Left ventricle myocardium superior (tissue), 1 donor: ENCODE measurements at regions of chr9 and their contacts with region 1.

Region 1: DNA sequence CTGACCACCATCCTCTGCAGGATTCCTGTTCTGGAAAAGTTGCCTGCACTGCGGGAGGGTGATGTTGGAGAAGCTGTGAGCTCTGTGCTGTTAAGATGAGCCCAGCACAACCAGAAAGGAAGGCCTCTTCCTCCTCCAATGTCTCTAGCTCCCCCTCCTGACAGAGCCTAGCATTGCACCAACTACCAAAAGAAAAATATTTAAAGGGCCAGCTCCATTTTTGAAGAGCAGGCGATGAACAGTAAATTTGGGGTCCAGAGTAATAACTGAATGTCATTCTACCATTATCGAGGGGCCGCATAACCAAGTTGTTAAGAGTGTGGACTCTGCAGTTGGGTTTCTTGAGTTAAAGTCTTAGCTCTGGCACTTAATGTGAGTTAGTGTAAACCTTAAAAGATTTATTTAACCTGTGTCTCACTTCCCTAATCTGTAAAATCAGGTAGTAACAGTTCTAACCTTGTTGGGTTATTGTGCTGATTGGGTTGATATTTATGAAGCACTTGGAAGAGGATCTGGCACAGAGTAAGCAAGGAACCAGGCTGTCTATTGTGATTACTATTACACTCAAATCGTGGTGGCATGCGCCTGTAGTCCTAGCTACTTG is 3.9 kb downstream of the TEX53 start:
- DNase-seq: no peak
- ATAC-seq: peak; percentile 65

Region 2: GRCh38 chr9:114405294-114406034 is 248.2 kb before region 1 on chr9:
- intact Hi-C with region 1: loop called (anchors 10 kb)
- DNase-seq: peak; percentile 73
- ATAC-seq: peak; percentile 96

Region 3: DNA sequence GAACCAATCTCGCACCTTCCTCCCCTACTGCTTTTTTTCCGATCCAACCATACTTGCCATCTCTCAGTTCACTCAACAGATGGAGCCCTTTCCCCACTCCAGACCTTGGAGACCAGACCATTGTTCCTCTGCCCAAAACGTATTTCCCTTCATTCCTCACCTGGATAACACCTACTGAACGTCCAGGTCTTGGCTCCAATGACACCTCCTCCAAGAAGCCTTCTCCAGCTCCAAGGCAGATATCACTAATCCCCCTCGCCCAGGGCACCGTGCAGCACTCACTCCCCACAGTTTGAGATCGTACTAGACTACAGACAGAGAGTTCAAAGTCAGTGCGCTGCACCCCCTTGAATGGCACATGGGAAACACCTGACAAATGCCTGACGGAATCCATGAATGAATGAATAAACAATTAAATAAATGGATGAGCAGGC is 218.8 kb before region 1 on chr9:
- intact Hi-C with region 1: loop called (anchors 10 kb)
- DNase-seq: no peak
- ATAC-seq: peak; percentile 32

Region 4: DNA sequence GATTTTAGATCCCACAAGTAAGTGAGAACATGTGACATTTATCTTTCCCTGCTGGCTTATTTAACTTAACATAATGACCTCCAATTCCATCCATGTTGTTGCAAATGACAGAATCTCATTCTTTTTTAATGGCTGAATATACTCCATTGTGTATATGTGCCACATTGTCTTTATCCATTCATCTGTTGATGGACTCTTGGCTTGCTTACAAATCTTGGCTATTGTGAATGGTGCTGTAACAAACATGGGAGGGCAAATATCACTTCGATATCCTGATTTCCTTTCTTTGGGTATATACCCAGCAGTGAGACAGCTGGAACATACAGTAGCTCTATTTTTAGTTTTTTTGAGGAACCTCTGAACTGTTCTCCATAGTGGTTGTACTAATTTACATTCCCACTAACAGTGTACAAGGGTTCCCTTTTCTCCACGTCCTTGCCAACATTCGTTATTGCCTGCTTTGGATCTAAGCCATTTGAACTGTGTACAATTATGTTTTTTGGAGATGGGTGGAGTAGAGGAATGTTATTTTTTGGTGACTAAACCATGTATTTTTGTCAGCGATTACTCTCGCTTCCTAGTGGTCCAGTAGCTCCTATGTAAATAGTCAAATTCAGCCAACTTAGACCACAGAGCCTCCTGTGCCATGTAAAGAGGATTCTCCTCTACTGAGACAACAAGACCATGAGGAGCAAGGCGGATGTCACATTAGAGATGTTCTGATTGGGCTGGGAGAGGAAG is 91.6 kb after region 1 on chr9:
- intact Hi-C with region 1: no loop called
- DNase-seq: no peak
- ATAC-seq: peak; percentile 21